Activated CD4-positive, alpha-beta memory T cell treated with anti-CD3 and anti-CD28 coated beads for 36 hours (primary cell): ENCODE measurements at regions of chr19 and their contacts with region 1.

Region 1: DNA sequence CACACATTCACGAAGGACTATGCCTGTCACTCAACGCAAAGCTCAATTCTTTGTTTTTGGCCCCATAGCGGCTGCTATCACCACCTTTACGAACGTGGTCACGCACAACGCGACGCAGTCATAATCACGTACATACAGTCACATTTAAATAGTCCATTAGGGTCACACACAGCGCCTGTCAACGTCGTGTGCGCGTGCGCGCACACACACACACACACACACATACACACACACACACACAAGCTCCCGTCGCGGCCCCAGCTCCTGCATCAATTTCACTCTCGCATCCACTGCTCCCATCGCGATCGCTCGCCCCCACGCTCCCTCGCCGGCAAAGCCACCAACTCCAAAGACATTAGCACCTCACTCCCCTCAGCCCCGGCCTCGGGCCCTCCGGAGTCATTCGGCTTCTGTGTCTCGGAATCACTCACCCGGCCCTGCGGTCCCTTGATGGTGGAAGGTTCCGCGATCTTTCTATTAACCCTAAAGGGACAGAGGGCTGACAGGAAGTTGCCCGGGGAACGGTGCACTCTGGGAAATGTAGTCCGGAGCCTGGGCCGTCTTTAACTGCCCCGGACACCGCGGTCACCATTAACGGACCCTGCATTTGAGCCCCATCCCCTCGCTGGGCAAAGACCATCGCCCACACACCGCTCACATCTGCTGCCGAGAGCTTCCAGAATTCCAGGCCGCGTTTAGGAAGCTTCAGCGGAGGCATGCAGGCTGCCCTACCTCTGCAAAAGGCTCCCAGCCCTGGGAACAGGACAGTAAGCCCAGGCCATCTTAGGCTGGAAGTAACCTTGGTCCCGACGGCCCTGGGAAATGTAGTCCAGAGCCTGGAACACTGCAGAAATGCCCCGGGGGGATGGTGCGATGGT is at the start of gene ZNF790:
- DNase-seq: peak; percentile 93
- H3K4me3 Mint-ChIP-seq: no peak within 1 kb of the TSS
- H3K27ac Mint-ChIP-seq: no peak within 1 kb of the TSS
- H3K4me1 Mint-ChIP-seq: peaks cover 6% of the 10 kb centered on the region
- H3K27me3 Mint-ChIP-seq: no peaks in the 10 kb centered on the region
- total RNA-seq, gene ZNF790: 6.1 to 6.9 TPM

Region 2: DNA sequence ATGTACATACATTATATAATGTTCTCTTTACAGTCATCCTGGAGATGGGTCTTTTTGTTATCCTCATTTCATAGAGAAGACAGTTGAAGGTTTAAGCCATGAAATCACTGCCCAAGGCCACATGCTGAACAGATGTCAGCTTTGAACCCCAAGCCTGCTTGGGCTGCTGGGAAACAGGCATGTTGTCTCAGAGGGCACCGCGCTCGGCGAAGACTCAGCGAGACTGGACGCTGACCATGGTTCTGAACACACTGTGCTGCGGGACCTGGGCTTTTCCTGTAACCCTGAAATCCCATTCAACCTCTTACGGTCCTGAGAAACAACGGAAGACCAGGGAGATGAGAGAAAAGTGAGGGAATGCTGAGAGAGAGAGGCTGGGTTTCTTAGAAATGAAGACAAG is 874.6 kb before region 1 on chr19:
- CTCF ChIA-PET with region 1: no interaction called
- POLR2A ChIA-PET with region 1: no interaction called
- intact Hi-C with region 1: no loop called
- DNase-seq: peak; percentile 63
- H3K4me3 Mint-ChIP-seq: no peak overlapping the region
- H3K27ac Mint-ChIP-seq: no peak overlapping the region
- H3K4me1 Mint-ChIP-seq: peaks cover 12% of the 10 kb centered on the region
- H3K27me3 Mint-ChIP-seq: peaks cover 3% of the 10 kb centered on the region

Region 3: GRCh38 chr19:36573020-36573885 is 264.9 kb before region 1 on chr19 and contains the start of gene ZNF529:
- CTCF ChIA-PET with region 1: no interaction called
- POLR2A ChIA-PET with region 1: no interaction called
- intact Hi-C with region 1: loop called (anchors 2 kb)
- DNase-seq: peak; percentile 92
- H3K4me3 Mint-ChIP-seq: peak within 1 kb of the TSS; percentile 87
- H3K27ac Mint-ChIP-seq: peak within 1 kb of the TSS; percentile 92
- H3K4me1 Mint-ChIP-seq: peaks cover 32% of the 10 kb centered on the region
- H3K27me3 Mint-ChIP-seq: no peaks in the 10 kb centered on the region
- total RNA-seq, gene ZNF529: 14.3 to 15.4 TPM

Region 4: GRCh38 chr19:36753305-36753704 is 84.8 kb before region 1 on chr19:
- CTCF ChIA-PET with region 1: no interaction called
- POLR2A ChIA-PET with region 1: no interaction called
- intact Hi-C with region 1: no loop called
- DNase-seq: no peak
- H3K4me3 Mint-ChIP-seq: no peak overlapping the region
- H3K27ac Mint-ChIP-seq: no peak overlapping the region
- H3K4me1 Mint-ChIP-seq: no peaks in the 10 kb centered on the region
- H3K27me3 Mint-ChIP-seq: no peaks in the 10 kb centered on the region

Region 5: GRCh38 chr19:36772311-36773222 is 65.6 kb before region 1 on chr19 and contains the start of gene ZNF850:
- CTCF ChIA-PET with region 1: no interaction called
- POLR2A ChIA-PET with region 1: interaction called, 5 read pairs
- intact Hi-C with region 1: loop called (anchors 1 kb)
- DNase-seq: peak; percentile 95
- H3K4me3 Mint-ChIP-seq: peak within 1 kb of the TSS; percentile 91
- H3K27ac Mint-ChIP-seq: peak within 1 kb of the TSS; percentile 83
- H3K4me1 Mint-ChIP-seq: peaks cover 21% of the 10 kb centered on the region
- H3K27me3 Mint-ChIP-seq: no peaks in the 10 kb centered on the region
- total RNA-seq, gene ZNF850: 6.7 TPM

Region 6: DNA sequence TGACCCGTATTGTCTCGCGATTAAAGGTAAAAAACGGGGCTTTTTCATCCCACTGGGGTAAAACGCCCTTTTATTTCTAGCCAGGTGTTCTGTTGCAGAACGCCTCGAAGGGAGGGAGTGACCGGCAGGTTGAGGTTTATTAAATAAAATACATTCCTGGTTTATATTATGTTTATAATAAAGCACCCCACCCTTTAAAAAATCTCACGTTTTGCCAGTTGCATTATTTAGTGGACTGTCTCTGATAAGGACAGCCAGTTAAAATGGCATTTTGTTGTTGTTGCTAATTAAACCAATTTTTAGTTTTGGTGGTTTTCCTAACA is 40.4 kb before region 1 on chr19:
- CTCF ChIA-PET with region 1: no interaction called
- POLR2A ChIA-PET with region 1: no interaction called
- intact Hi-C with region 1: loop called (anchors 1 kb)
- DNase-seq: no peak
- H3K4me3 Mint-ChIP-seq: peak overlapping the region; percentile 80
- H3K27ac Mint-ChIP-seq: peak overlapping the region; percentile 89
- H3K4me1 Mint-ChIP-seq: peaks cover 8% of the 10 kb centered on the region
- H3K27me3 Mint-ChIP-seq: no peaks in the 10 kb centered on the region

Region 7: GRCh38 chr19:36973021-36973843 is 135.1 kb after region 1 on chr19:
- CTCF ChIA-PET with region 1: interaction called, 4 read pairs
- POLR2A ChIA-PET with region 1: interaction called, 3 read pairs
- intact Hi-C with region 1: loop called (anchors 5 kb)
- DNase-seq: peak; percentile 91
- H3K4me3 Mint-ChIP-seq: peak overlapping the region; percentile 89
- H3K27ac Mint-ChIP-seq: peak overlapping the region; percentile 95
- H3K4me1 Mint-ChIP-seq: peaks cover 7% of the 10 kb centered on the region
- H3K27me3 Mint-ChIP-seq: no peaks in the 10 kb centered on the region